ENCODE measurements at regions of chrX and their contacts with region 1.

Region 1: GRCh38 chrX:152632445-152633097 is 5.1 kb upstream of the GABRQ start:
- DNase-seq: peak in 1 of 2 experiments; percentile 46
- H3K4me3 ChIP-seq: no peak overlapping the region
- H3K4me3 Mint-ChIP-seq: no peak overlapping the region
- H3K27ac Mint-ChIP-seq: no peak overlapping the region
- H3K4me1 ChIP-seq: no peaks in the 10 kb centered on the region
- H3K4me1 Mint-ChIP-seq: no peaks in the 10 kb centered on the region
- H3K27me3 ChIP-seq: no peaks in the 10 kb centered on the region
- H3K27me3 Mint-ChIP-seq: peaks cover 18% of the 10 kb centered on the region
- CTCF ChIP-seq: peak; percentile 64 to 70

Region 2: DNA sequence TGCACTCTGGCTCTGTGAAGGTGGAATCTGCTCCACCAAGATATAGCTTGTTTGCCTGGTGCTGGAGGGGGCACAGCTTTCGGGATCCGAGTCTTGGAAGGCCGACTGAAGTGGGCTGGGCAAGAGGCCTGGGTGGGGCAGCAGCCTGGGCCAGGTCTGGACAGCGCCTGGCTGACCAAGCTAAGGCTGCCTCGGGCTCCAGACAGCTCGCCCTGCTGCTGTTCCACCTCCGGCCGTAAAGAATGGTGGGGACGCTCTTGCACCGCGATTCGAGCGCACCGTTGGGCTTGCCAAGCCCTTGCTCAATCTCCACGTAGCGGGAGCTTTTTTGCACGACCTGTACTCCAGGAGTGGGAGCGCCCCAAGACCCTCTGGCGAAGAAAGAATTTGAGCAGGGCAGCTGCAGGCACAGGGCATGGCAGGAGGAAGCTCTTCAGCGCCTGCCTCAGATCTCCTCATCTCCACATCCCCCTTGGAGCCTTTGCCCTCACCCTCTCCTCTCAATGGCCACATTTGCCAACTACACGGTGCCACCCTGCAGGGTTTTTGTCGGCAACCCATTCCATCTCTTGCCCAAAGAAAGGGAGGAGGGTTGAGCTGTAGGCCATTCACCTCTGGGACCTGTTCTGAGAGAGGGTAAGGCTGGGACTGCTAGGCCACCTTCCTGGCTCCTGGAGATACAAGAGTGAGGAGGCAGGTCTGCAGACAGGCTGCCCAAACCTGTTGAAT is 879.1 kb before region 1 on chrX:
- CTCF ChIA-PET with region 1: interaction called, 11 read pairs
- POLR2A ChIA-PET with region 1: no interaction called
- intact Hi-C with region 1: loop called (anchors 1 kb)
- DNase-seq: peak; percentile 36 to 56
- H3K4me3 ChIP-seq: no peak overlapping the region
- H3K4me3 Mint-ChIP-seq: no peak overlapping the region
- H3K27ac Mint-ChIP-seq: no peak overlapping the region
- H3K4me1 ChIP-seq: no peaks in the 10 kb centered on the region
- H3K4me1 Mint-ChIP-seq: no peaks in the 10 kb centered on the region
- H3K27me3 ChIP-seq: no peaks in the 10 kb centered on the region
- H3K27me3 Mint-ChIP-seq: peaks cover 19% of the 10 kb centered on the region
- CTCF ChIP-seq: peak; percentile 47 to 79

Region 3: GRCh38 chrX:151801993-151802392 is 830.6 kb before region 1 on chrX:
- CTCF ChIA-PET with region 1: interaction called, 4 read pairs
- POLR2A ChIA-PET with region 1: no interaction called
- intact Hi-C with region 1: loop called (anchors 1 kb)
- DNase-seq: peak in 1 of 2 experiments; percentile 13
- H3K4me3 ChIP-seq: no peak overlapping the region
- H3K4me3 Mint-ChIP-seq: no peak overlapping the region
- H3K27ac Mint-ChIP-seq: no peak overlapping the region
- H3K4me1 ChIP-seq: no peaks in the 10 kb centered on the region
- H3K4me1 Mint-ChIP-seq: no peaks in the 10 kb centered on the region
- H3K27me3 ChIP-seq: no peaks in the 10 kb centered on the region
- H3K27me3 Mint-ChIP-seq: no peaks in the 10 kb centered on the region
- CTCF ChIP-seq: peak in 1 of 2 experiments; percentile 49

Measured in Caco-2 (cell line).